MCF 10A (cell line): ENCODE measurements at regions of chr16 and their contacts with region 1.

Region 1: GRCh38 chr16:21599233-21600030 is at the start of gene METTL9:
- DNase-seq: peak; percentile 95
- H3K4me3 Mint-ChIP-seq: peak within 1 kb of the TSS; percentile 83
- H3K27ac Mint-ChIP-seq: peak within 1 kb of the TSS; percentile 92
- H3K4me1 Mint-ChIP-seq: peaks cover 21% of the 10 kb centered on the region
- H3K27me3 Mint-ChIP-seq: no peaks in the 10 kb centered on the region
- CTCF ChIP-seq: no peak
- total RNA-seq, gene METTL9: 63.9 and 67.6 TPM in 2 replicates

Region 2: DNA sequence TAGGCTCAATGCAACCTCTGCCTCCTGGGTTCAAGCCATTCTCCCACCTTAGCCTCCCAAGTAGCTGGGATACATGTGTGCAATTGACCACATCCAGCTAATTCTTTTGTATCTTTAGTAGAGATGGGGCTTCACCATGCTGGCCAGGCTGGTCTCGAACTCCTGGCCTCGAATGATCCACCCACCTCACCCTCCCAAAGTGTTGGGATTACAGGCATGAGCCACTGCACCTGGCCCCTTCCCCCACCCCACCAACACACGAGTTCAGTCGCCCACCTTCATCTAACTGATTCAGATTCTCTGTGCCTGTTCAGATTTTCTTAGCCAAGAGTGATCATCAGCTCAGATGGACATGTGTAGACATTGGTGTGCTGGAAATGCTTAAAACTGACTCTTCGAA is 25.1 kb before region 1 on chr16:
- CTCF ChIA-PET with region 1: no interaction called
- POLR2A ChIA-PET with region 1: no interaction called
- intact Hi-C with region 1: no loop called
- DNase-seq: no peak
- H3K4me3 Mint-ChIP-seq: no peak overlapping the region
- H3K27ac Mint-ChIP-seq: no peak overlapping the region
- H3K4me1 Mint-ChIP-seq: no peaks in the 10 kb centered on the region
- H3K27me3 Mint-ChIP-seq: peaks cover 20% of the 10 kb centered on the region
- CTCF ChIP-seq: no peak

Region 3: DNA sequence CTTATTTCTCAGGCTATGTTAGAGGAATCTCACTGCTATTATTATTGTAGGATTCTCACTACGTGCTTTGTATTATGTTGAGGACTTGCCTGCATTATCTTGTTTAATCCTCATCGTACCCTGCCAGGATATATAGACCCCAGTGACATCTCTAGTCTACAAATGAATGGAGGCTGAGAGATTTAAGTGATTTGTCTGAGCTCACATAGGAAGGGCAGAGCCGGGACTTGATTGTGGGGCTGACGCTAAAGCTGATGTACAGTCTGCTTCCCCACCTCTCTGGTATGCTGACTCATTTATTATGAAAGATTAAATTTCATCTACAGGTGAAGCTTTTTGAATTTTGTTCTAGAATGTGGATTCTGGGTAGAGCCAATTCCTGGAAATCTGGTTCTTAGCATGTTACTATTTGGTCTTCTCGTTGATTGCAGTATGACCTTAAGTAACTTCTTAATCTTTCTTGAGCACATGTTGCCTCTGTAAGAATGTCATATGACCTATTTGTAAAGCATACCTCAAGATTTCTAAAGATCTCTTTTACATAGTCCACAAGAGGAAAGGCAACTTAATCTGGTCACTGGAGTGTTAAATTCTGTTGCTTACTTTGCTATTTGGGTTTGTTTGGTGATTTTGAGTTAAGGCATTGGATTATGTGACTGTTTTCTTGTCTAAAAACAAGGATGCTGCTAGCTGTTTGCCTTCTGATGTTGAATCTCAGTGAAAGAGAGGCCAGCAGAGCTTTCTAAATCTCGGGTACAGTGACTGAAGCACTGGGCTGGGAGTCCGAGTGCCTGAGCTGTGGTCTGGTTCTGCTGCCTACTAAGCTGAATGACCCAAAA is 12.3 kb after region 1 on chr16:
- CTCF ChIA-PET with region 1: interaction called, 3 read pairs
- POLR2A ChIA-PET with region 1: interaction called, 94 read pairs
- intact Hi-C with region 1: loop called (anchors 1 kb)
- DNase-seq: peak; percentile 47
- H3K4me3 Mint-ChIP-seq: peak overlapping the region; percentile 22
- H3K27ac Mint-ChIP-seq: peak overlapping the region; percentile 78
- H3K4me1 Mint-ChIP-seq: peaks cover 21% of the 10 kb centered on the region
- H3K27me3 Mint-ChIP-seq: no peaks in the 10 kb centered on the region
- CTCF ChIP-seq: no peak